GM12878 (cell line): ENCODE measurements at regions of chr17 and their contacts with region 1.

Region 1: DNA sequence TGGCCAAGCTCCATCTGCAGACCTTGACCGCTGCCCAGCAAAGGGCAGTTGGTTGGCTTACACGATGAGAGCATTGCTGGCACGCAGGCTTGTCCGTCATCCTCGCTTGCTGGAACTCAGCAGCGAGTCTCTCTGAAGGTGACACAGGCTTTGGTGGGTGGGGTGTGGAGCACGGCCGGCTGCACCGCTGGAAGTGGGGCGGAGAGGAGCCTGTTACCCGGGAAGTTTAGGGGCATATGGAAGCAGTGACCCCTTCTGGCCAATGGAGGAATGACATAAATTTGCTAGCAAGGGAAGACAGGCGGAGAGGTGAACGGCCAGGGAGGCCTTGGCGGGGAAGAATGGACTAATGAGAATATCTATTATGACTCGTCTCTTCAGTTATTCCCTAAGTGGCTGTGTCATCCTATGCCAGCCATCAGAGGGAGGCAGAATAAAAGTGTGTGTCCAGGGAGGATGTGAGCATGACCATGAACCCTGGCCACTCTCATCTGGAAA is 65.9 kb upstream of the SDK2 start:
- DNase-seq: peak; percentile 5
- ATAC-seq: peak; percentile 81
- H3K4me3 ChIP-seq: no peak overlapping the region
- H3K27ac ChIP-seq: no peak overlapping the region
- H3K4me1 ChIP-seq: no peaks in the 10 kb centered on the region; the same call in 1 of the 2 replicates
- H3K27me3 ChIP-seq: no peaks in the 10 kb centered on the region
- CTCF ChIP-seq: peak; percentile 72 to 76 (median 72)
- EP300 ChIP-seq: no peak
- POLR2A ChIP-seq: no peak
- RAD21 ChIP-seq: peak; percentile 78

Region 2: DNA sequence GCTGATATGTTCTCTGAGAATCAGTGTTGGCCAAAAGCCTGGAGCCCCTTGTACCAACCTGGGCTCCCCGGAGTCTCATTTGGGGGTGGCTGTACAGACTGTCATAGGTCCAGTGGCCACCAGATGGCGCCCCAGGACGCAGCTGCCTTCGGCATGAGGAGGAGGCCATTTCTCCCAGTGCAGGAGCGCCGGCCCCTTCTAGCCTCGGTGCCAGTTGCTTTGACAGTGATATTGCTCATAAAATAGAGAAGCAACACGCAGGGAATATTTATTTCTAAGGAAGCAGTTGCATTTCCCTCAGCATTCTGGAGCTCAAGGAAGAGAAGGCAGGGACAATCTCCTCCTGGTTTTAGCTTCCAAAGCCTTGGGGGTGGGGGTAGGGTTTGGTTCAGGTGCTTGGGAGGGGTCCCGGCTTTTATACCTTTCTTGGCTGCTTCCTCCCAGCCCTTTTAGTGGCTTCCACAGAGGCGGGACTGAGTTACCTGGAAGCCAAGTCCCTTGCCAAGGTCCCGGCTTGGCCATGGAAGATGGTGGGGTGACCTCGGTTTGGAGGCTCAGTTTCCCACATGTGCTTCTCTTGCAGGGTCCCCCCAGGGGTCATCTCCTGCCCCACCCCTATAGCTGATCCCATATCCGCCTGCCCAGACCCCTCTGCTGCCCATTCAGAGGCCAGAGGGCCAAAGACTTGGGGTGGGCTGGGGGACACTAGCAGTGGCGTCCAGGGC is 280.5 kb before region 1 on chr17:
- CTCF ChIA-PET with region 1: interaction called, 55 read pairs
- POLR2A ChIA-PET with region 1: no interaction called
- RAD21 ChIA-PET with region 1: interaction called, 23 read pairs
- SMC1A ChIA-PET with region 1: interaction called, 18 read pairs
- in situ Hi-C with region 1: no loop called
- intact Hi-C with region 1: loop called (anchors 1 kb)
- DNase-seq: peak; percentile 7
- ATAC-seq: peak; percentile 100
- H3K4me3 ChIP-seq: no peak overlapping the region
- H3K27ac ChIP-seq: no peak overlapping the region
- H3K4me1 ChIP-seq: no peaks in the 10 kb centered on the region
- H3K27me3 ChIP-seq: no peaks in the 10 kb centered on the region; a peak in 1 of 4 replicates
- CTCF ChIP-seq: peak; percentile 93 to 95 (median 93)
- EP300 ChIP-seq: no peak
- POLR2A ChIP-seq: no peak
- RAD21 ChIP-seq: peak; percentile 89

Region 3: DNA sequence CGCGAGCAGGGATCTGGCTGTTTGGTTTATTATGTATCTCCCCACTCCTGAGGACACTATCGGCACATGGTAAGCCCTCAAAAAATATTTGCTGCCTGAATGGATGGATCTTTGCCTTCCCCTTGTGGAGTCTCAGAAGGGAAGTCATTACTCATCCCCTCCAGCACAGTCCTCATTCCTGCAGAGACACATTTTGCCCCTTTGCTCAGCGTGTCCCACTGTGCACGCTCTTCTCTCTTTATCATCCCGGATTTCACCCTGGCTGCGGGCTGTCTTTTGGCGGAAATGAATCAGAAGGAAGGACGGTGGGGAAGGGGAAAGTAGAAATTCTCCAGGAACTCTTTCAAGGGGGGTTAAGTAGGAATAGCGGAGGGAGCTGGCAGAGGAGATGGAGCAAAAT is 273.2 kb before region 1 on chr17:
- CTCF ChIA-PET with region 1: no interaction called
- POLR2A ChIA-PET with region 1: no interaction called
- RAD21 ChIA-PET with region 1: no interaction called
- SMC1A ChIA-PET with region 1: no interaction called
- in situ Hi-C with region 1: loop called (anchors 5 kb)
- intact Hi-C with region 1: no loop called
- DNase-seq: no peak
- ATAC-seq: no peak
- H3K4me3 ChIP-seq: no peak overlapping the region
- H3K27ac ChIP-seq: no peak overlapping the region
- H3K4me1 ChIP-seq: no peaks in the 10 kb centered on the region
- H3K27me3 ChIP-seq: no peaks in the 10 kb centered on the region; a peak in 1 of 4 replicates
- CTCF ChIP-seq: no peak
- EP300 ChIP-seq: no peak
- POLR2A ChIP-seq: no peak
- RAD21 ChIP-seq: no peak

Region 4: GRCh38 chr17:73586921-73587602 is 123.1 kb before region 1 on chr17:
- CTCF ChIA-PET with region 1: interaction called, 24 read pairs
- POLR2A ChIA-PET with region 1: no interaction called
- RAD21 ChIA-PET with region 1: interaction called, 6 read pairs
- SMC1A ChIA-PET with region 1: interaction called, 4 read pairs
- in situ Hi-C with region 1: no loop called
- intact Hi-C with region 1: no loop called
- DNase-seq: no peak
- ATAC-seq: no peak
- H3K4me3 ChIP-seq: no peak overlapping the region
- H3K27ac ChIP-seq: no peak overlapping the region
- H3K4me1 ChIP-seq: peaks cover 18% of the 10 kb centered on the region
- H3K27me3 ChIP-seq: peaks cover 0 to 5% of the 10 kb centered on the region in 2 experiments; a peak in 3 of 4 replicates
- CTCF ChIP-seq: no peak
- EP300 ChIP-seq: no peak
- POLR2A ChIP-seq: no peak
- RAD21 ChIP-seq: no peak